Upper lobe of right lung (tissue), 1 donor: ENCODE measurements at regions of chr1 and their contacts with region 1.

Region 1: GRCh38 chr1:205668951-205669340 is 11.4 kb downstream of the SLC45A3 start:
- DNase-seq: no peak
- ATAC-seq: peak; percentile 49
- H3K4me3 ChIP-seq: no peak overlapping the region
- H3K27ac ChIP-seq: no peak overlapping the region
- H3K4me1 ChIP-seq: no peaks in the 10 kb centered on the region
- H3K27me3 ChIP-seq: no peaks in the 10 kb centered on the region
- CTCF ChIP-seq: no peak

Region 2: DNA sequence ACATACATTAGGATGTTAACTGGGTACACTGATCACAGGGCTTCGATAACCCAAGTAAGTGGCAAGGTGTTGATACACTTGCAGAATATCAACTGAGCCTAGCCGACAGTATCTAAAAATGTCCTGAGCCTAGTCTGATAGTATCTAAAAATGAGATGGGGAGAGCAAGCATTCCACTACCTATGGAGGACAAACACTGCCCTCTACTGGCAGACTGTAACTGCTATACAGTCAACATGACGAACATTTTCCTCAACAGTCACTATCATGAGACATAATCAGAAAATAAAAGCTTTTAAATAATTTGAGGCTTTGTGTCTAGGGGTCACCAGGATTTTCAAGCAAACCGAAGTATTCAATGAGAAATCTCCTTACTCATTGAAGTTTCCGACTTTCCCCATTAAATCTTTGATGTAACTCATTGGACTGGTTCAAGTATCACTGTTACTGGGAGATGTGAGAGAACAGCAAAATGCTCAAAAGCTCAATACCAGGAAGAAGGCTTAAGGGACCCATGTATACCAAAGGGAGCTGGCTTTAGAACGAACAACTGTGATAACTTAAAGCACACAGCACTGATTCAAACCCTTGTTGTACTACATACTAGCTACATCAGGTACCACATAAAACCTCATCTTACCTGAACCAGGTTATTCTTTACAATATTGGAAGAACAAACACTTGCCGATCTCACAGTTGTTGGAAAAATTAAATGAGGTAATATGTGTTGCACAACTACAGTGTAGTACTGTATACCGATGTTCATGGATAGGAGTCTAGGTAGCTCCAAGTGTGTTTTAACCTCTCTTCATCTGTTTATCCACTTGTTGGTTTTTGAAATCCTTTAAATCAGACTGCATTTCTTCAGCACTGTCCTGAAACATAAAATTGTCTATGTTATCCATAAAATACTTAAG is 42.4 kb after region 1 on chr1:
- intact Hi-C with region 1: loop called (anchors 10 kb)
- DNase-seq: no peak
- ATAC-seq: peak; percentile 90
- H3K4me3 ChIP-seq: no peak overlapping the region
- H3K27ac ChIP-seq: no peak overlapping the region
- H3K4me1 ChIP-seq: peaks cover 8% of the 10 kb centered on the region
- H3K27me3 ChIP-seq: no peaks in the 10 kb centered on the region
- CTCF ChIP-seq: peak; percentile 90